Activated CD4-positive, alpha-beta memory T cell treated with anti-CD3 and anti-CD28 coated beads for 36 hours (primary cell): ENCODE measurements at regions of chr10 and their contacts with region 1.

Region 1: DNA sequence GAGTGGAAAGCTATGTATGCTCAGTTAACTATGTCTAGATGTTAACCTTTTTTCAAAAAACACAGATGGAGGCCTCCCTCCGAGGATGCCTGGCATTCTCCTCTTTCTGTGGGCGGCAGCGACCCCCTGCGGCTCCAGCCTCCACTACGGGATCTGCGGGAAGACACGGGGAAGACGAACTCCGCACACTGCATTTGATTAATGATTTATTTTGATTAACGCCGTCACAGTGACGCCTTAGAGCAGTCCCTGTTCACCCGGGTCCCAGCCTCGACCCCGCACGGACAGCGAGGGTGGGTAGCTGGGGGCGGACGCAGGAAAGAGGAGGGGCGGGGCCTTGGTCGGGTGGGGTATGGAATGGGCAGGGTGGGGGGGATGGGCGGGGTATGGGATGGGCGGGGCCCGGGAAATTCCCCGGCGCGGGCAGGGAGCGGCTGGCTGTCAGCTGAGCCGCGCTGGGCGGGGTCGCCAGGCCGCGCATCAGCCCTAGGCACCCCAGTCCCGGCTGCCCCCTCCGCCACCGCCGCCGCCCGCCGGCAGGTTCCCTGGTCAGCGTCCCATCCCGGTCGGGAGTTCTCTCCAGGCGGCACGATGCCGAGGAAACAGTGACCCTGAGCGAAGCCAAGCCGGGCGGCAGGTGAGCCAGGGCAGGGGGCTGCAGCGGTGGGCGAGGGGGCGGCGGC is at the start of gene OPTN:
- DNase-seq: peak; percentile 87
- H3K4me3 Mint-ChIP-seq: peak within 1 kb of the TSS; percentile 89
- H3K27ac Mint-ChIP-seq: peak within 1 kb of the TSS; percentile 86
- H3K4me1 Mint-ChIP-seq: peaks cover 39% of the 10 kb centered on the region
- H3K27me3 Mint-ChIP-seq: no peaks in the 10 kb centered on the region
- total RNA-seq, gene OPTN: 107 to 113 TPM

Region 2: GRCh38 chr10:12129222-12130111 is 970.3 kb before region 1 on chr10 and contains the start of gene SEC61A2:
- CTCF ChIA-PET with region 1: no interaction called
- POLR2A ChIA-PET with region 1: no interaction called
- intact Hi-C with region 1: loop called (anchors 10 kb)
- DNase-seq: peak; percentile 98
- H3K4me3 Mint-ChIP-seq: peak within 1 kb of the TSS; percentile 83
- H3K27ac Mint-ChIP-seq: peak within 1 kb of the TSS; percentile 74
- H3K4me1 Mint-ChIP-seq: peaks cover 31% of the 10 kb centered on the region
- H3K27me3 Mint-ChIP-seq: no peaks in the 10 kb centered on the region
- total RNA-seq, gene SEC61A2: 14.4 to 14.6 TPM

Region 3: DNA sequence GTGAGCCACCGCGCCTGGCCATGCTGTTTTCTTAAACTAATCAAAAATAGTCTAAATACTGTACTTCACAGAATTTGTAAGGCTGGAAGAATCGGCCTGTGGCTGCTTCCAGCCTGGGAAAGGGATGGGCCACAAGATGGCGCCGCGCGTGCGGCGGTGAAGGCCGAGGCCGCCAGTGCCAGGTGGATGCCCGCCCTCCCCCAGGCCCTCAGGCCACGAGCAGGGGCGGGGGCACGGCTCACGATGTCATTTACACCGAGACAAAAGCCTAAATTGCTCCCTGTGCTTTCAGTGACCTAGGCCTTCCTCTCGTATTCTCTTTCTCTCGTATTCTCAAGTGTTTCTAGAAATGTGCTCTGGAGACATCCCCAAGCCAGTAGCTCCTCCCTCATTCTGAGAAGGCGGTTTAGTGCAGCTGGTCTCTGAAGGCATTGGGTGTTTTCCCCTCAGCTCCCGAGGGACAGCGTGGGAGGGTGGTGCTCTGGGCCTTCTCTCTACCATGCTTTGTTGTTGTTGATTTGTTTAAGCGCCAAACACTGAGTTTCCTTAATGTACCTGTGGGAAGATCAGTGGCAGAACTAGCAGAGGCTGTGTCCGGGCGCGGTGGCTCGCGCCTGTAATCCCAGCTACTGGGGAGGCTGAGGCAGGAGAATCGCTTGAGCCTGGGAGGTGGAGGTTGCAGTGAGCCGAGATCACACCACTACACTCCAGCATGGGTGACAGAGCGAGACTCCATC is 835.4 kb before region 1 on chr10:
- CTCF ChIA-PET with region 1: no interaction called
- POLR2A ChIA-PET with region 1: no interaction called
- intact Hi-C with region 1: loop called (anchors 1 kb)
- DNase-seq: peak; percentile 87
- H3K4me3 Mint-ChIP-seq: peak overlapping the region; percentile 47
- H3K27ac Mint-ChIP-seq: peak overlapping the region; percentile 82
- H3K4me1 Mint-ChIP-seq: peaks cover 19% of the 10 kb centered on the region
- H3K27me3 Mint-ChIP-seq: no peaks in the 10 kb centered on the region

Region 4: DNA sequence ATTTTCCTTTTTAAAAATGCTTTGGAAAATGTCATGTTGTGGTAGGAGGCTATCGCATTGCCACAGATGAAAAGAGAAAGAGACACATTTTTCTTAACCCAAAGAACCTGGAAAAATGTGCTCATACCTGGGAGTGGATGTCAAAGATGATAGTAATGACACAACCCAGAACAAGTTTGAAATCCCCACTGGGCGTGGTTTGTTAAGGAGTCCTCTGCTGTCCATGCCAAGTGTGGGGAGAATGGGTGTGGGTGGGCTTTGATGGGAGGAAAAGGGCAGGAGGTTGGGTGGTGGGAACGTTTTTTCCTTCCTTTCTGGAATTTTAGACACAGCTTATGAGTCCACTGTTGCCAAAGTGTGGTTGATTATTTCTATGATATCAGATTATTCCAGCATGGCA is 11.1 kb after region 1 on chr10:
- CTCF ChIA-PET with region 1: interaction called, 19 read pairs
- POLR2A ChIA-PET with region 1: interaction called, 10 read pairs
- intact Hi-C with region 1: no loop called
- DNase-seq: peak; percentile 26
- H3K4me3 Mint-ChIP-seq: no peak overlapping the region
- H3K27ac Mint-ChIP-seq: peak overlapping the region; percentile 71
- H3K4me1 Mint-ChIP-seq: peaks cover 49% of the 10 kb centered on the region
- H3K27me3 Mint-ChIP-seq: no peaks in the 10 kb centered on the region

Region 5: GRCh38 chr10:13348216-13349017 is 248.6 kb after region 1 on chr10 and contains the start of gene SEPHS1:
- CTCF ChIA-PET with region 1: no interaction called
- POLR2A ChIA-PET with region 1: no interaction called
- intact Hi-C with region 1: loop called (anchors 5 kb)
- DNase-seq: peak; percentile 91
- H3K4me3 Mint-ChIP-seq: peak within 1 kb of the TSS; percentile 94
- H3K27ac Mint-ChIP-seq: peak within 1 kb of the TSS; percentile 93
- H3K4me1 Mint-ChIP-seq: peaks cover 51% of the 10 kb centered on the region
- H3K27me3 Mint-ChIP-seq: no peaks in the 10 kb centered on the region
- total RNA-seq, gene SEPHS1: 57.2 to 57.6 TPM